GM12878 (cell line): ENCODE measurements at regions of chr11 and their contacts with region 1.

Region 1: GRCh38 chr11:87219266-87219665 is 181.5 kb downstream of the TMEM135 start:
- DNase-seq: peak; percentile 28
- ATAC-seq: peak; percentile 71
- H3K4me3 ChIP-seq: no peak overlapping the region
- H3K27ac ChIP-seq: no peak overlapping the region
- H3K4me1 ChIP-seq: no peaks in the 10 kb centered on the region
- H3K27me3 ChIP-seq: no peaks in the 10 kb centered on the region
- CTCF ChIP-seq: no peak
- EP300 ChIP-seq: no peak
- POLR2A ChIP-seq: no peak
- RAD21 ChIP-seq: no peak

Region 2: GRCh38 chr11:87252869-87253268 is 33.6 kb after region 1 on chr11:
- CTCF ChIA-PET with region 1: no interaction called
- POLR2A ChIA-PET with region 1: no interaction called
- RAD21 ChIA-PET with region 1: no interaction called
- SMC1A ChIA-PET with region 1: no interaction called
- in situ Hi-C with region 1: loop called (anchors 5 kb)
- intact Hi-C with region 1: no loop called
- DNase-seq: no peak
- ATAC-seq: peak; percentile 46; the same call in 2 of the 3 replicates
- H3K4me3 ChIP-seq: no peak overlapping the region
- H3K27ac ChIP-seq: no peak overlapping the region
- H3K4me1 ChIP-seq: no peaks in the 10 kb centered on the region
- H3K27me3 ChIP-seq: no peaks in the 10 kb centered on the region
- CTCF ChIP-seq: no peak
- EP300 ChIP-seq: no peak
- POLR2A ChIP-seq: no peak
- RAD21 ChIP-seq: no peak